A673 (cell line): ENCODE measurements at regions of chr2 and their contacts with region 1.

Region 1: GRCh38 chr2:147082850-147083522 is 761.8 kb upstream of the ACVR2A start:
- DNase-seq: peak; percentile 83
- H3K4me3 ChIP-seq: no peak overlapping the region
- H3K27ac ChIP-seq: no peak overlapping the region
- H3K4me1 ChIP-seq: no peaks in the 10 kb centered on the region
- H3K27me3 ChIP-seq: no peaks in the 10 kb centered on the region
- CTCF ChIP-seq: peak; percentile 92

Region 2: DNA sequence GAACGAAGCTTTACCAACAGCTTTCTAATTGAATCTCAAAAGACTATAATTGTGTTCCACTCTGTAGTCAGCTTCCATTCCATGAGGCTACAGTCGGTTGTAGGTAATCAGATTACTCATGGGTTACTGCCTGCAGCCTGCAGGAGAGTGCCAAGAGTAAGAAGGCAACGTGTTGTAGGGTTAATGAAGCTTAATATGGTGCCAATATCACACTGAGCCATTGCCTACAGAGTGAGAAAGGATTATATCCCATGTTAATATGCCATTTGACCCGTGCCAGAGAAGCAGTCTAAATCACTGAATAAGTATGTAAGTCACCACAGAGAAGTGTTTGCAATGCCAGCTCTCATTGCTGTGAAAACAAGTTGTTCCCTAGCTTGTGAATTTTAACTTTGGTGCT is 27.3 kb after region 1 on chr2:
- CTCF ChIA-PET with region 1: interaction called, 11 read pairs
- POLR2A ChIA-PET with region 1: no interaction called
- intact Hi-C with region 1: no loop called
- DNase-seq: peak; percentile 64
- H3K4me3 ChIP-seq: no peak overlapping the region
- H3K27ac ChIP-seq: no peak overlapping the region
- H3K4me1 ChIP-seq: no peaks in the 10 kb centered on the region
- H3K27me3 ChIP-seq: no peaks in the 10 kb centered on the region
- CTCF ChIP-seq: no peak

Region 3: GRCh38 chr2:147547440-147547839 is 464.5 kb after region 1 on chr2:
- CTCF ChIA-PET with region 1: no interaction called
- POLR2A ChIA-PET with region 1: no interaction called
- intact Hi-C with region 1: no loop called
- DNase-seq: no peak
- H3K4me3 ChIP-seq: no peak overlapping the region
- H3K27ac ChIP-seq: no peak overlapping the region
- H3K4me1 ChIP-seq: no peaks in the 10 kb centered on the region
- H3K27me3 ChIP-seq: no peaks in the 10 kb centered on the region
- CTCF ChIP-seq: no peak